WTC11 (cell line): ENCODE measurements at regions of chr2 and their contacts with region 1.

Region 1: GRCh38 chr2:8636721-8637636 is 44.9 kb upstream of the ID2 start:
- DNase-seq: peak; percentile 31
- ATAC-seq: peak; percentile 66
- H3K4me3 Mint-ChIP-seq: peak overlapping the region; percentile 37
- H3K27ac Mint-ChIP-seq: peak overlapping the region; percentile 58; the same call in 1 of the 2 replicates
- H3K4me1 Mint-ChIP-seq: peaks cover 47% of the 10 kb centered on the region
- H3K27me3 Mint-ChIP-seq: peaks cover 26% of the 10 kb centered on the region
- CTCF ChIP-seq: no peak

Region 2: DNA sequence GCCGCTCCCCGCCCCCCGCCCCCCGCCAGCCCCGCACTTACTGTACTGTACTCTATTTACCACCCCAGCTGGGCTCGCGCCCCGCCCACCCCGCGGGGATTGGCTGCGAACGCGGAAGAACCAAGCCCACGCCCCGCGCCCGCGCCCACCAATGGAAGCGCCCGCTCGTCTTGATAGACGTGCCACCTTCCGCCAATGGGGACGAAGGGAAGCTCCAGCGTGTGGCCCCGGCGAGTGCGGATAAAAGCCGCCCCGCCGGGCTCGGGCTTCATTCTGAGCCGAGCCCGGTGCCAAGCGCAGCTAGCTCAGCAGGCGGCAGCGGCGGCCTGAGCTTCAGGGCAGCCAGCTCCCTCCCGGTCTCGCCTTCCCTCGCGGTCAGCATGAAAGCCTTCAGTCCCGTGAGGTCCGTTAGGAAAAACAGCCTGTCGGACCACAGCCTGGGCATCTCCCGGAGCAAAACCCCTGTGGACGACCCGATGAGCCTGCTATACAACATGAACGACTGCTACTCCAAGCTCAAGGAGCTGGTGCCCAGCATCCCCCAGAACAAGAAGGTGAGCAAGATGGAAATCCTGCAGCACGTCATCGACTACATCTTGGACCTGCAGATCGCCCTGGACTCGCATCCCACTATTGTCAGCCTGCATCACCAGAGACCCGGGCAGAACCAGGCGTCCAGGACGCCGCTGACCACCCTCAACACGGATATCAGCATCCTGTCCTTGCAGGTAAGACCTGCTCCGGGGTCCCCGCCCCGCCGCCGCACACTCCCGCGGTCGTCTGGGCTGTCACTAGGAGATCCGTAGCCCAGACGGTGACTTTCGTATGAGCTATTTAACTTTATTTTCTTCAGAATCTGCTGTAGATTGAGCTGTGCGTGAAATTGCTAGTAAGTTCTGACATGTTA is 45.1 kb after region 1 on chr2 and contains the start of gene ID2:
- CTCF ChIA-PET with region 1: interaction called, 11 read pairs
- POLR2A ChIA-PET with region 1: interaction called, 11 read pairs
- DNase-seq: peak; percentile 99
- ATAC-seq: peak; percentile 71
- H3K4me3 Mint-ChIP-seq: peak within 1 kb of the TSS; percentile 94
- H3K27ac Mint-ChIP-seq: peak within 1 kb of the TSS; percentile 99
- H3K4me1 Mint-ChIP-seq: peaks cover 49% of the 10 kb centered on the region
- H3K27me3 Mint-ChIP-seq: peaks cover 42% of the 10 kb centered on the region
- CTCF ChIP-seq: no peak
- total RNA-seq, gene ID2: 38.6 to 55.0 TPM (median 47.0 TPM) in 3 replicates